ENCODE measurements at regions of chr20 and their contacts with region 1.

Region 1: DNA sequence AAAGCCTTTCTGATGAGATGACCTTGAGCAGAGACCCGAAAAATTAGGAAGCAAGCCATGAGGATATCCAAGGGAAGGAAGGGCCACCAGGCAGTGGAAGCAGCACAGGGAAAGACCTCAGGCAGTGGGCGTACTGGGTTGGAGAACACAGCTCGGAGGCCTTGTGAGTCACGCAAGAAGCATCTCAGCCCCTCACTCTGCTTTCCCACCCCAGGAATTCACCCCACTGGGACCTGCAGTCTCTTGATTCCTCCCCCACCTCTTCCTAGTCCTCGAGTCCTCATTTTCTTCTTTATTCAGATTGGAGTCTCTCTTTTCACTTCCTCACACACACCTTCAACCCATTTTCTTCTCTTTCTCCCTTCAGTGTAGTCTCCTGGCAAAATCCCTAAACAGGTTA is 27.0 kb downstream of the RPRD1B start:
- DNase-seq: no peak
- ATAC-seq: no peak
- H3K4me3 ChIP-seq: no peak overlapping the region
- H3K27ac ChIP-seq: no peak overlapping the region
- H3K4me1 ChIP-seq: peaks cover 3% of the 10 kb centered on the region
- H3K27me3 ChIP-seq: no peaks in the 10 kb centered on the region
- CTCF ChIP-seq: no peak

Region 2: GRCh38 chr20:37956084-37956483 is 104.5 kb before region 1 on chr20:
- intact Hi-C with region 1: no loop called
- DNase-seq: no peak
- ATAC-seq: no peak
- H3K4me3 ChIP-seq: no peak overlapping the region
- H3K27ac ChIP-seq: no peak overlapping the region
- H3K4me1 ChIP-seq: no peaks in the 10 kb centered on the region
- H3K27me3 ChIP-seq: no peaks in the 10 kb centered on the region
- CTCF ChIP-seq: no peak

Region 3: GRCh38 chr20:38217791-38218575 is 157.4 kb after region 1 on chr20:
- intact Hi-C with region 1: loop called (anchors 5 kb)
- DNase-seq: peak; percentile 35
- ATAC-seq: no peak
- H3K4me3 ChIP-seq: no peak overlapping the region
- H3K27ac ChIP-seq: no peak overlapping the region
- H3K4me1 ChIP-seq: no peaks in the 10 kb centered on the region
- H3K27me3 ChIP-seq: no peaks in the 10 kb centered on the region
- CTCF ChIP-seq: no peak